ENCODE measurements at regions of chr2 and their contacts with region 1.

Region 1: GRCh38 chr2:230007931-230008707 is 60.6 kb downstream of the SLC16A14 start:
- DNase-seq: peak; percentile 44 to 92
- H3K4me3 ChIP-seq: no peak overlapping the region
- H3K27ac ChIP-seq: no peak overlapping the region
- H3K4me1 ChIP-seq: no peaks in the 10 kb centered on the region
- H3K27me3 ChIP-seq: no peaks in the 10 kb centered on the region
- CTCF ChIP-seq: peak; percentile 18 to 84 (median 78)
- EP300 ChIP-seq: no peak
- POLR2A ChIP-seq: no peak
- RAD21 ChIP-seq: peak; percentile 91 to 94

Region 2: DNA sequence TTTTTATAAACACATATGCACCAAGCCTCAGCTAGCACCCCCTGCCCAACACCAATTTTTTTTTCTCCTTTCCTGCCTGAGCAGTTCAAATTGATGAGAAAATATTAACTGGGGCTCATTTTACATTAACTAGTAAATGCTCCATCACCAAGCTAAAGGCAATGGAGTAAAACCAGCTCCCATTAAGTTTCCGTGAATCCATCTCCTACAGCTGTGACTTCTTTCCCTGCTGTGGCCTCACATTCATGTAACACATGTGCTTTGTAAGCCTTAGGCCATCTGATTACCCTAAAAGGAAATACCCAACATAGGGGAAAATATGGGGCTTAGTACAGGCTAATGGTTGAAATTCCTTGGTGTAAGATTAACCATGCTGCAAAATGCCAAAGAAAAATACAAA is 354.6 kb before region 1 on chr2:
- CTCF ChIA-PET with region 1: no interaction called
- POLR2A ChIA-PET with region 1: no interaction called
- DNase-seq: no peak
- H3K4me3 ChIP-seq: no peak overlapping the region
- H3K27ac ChIP-seq: no peak overlapping the region
- H3K4me1 ChIP-seq: peaks cover 0 to 16% (median under 1%) of the 10 kb centered on the region in 4 experiments; a peak in 3 of 7 replicates
- H3K27me3 ChIP-seq: no peaks in the 10 kb centered on the region
- CTCF ChIP-seq: no peak
- EP300 ChIP-seq: no peak
- POLR2A ChIP-seq: no peak
- RAD21 ChIP-seq: no peak

Region 3: DNA sequence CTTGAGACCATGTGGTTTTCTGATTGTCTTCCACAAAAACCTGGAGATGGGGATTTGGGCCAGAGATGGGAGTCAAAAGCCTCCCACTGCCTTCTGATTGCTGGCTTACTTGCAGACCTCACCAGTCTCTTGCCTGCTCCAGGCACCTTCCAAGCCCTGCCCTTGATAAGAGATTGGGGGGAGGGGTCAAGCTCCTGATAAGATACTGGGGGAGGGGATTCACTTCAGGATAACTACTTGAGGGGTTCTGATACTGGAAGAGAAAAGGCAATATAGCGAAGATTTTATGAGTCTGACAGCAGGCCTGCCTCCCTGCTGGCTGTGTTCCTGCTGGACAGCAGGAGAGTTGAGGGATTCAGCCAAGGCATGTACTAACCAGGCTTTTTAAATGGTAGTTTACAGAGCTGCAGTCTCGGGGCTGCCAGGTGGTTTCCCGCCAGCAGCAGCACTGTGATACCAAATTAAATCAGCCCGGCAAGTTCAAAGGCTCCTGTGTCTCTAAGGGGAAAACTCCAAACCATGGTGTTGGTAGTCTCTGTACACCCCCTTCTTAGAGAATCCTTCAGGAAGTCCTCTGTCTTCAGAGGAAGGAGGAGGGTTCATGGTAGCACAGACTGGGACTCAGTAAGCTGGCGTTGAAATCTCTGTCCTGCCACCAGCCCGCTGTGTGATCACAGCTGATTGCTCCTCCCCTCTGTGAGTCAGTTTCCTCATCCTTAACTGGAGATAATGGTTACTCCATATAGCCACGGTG is 27.5 kb before region 1 on chr2:
- CTCF ChIA-PET with region 1: interaction called, 12 read pairs
- POLR2A ChIA-PET with region 1: no interaction called
- DNase-seq: peak in 1 of 2 experiments; percentile 55
- H3K4me3 ChIP-seq: no peak overlapping the region
- H3K27ac ChIP-seq: no peak overlapping the region
- H3K4me1 ChIP-seq: peaks cover 2 to 9% (median 6%) of the 10 kb centered on the region in 4 experiments; a peak in 6 of 7 replicates
- H3K27me3 ChIP-seq: no peaks in the 10 kb centered on the region
- CTCF ChIP-seq: no peak
- EP300 ChIP-seq: no peak
- POLR2A ChIP-seq: no peak
- RAD21 ChIP-seq: no peak

Region 4: GRCh38 chr2:230018153-230018552 is 10.0 kb after region 1 on chr2:
- CTCF ChIA-PET with region 1: interaction called, 48 read pairs
- POLR2A ChIA-PET with region 1: interaction called, 3 read pairs
- DNase-seq: no peak
- H3K4me3 ChIP-seq: no peak overlapping the region
- H3K27ac ChIP-seq: no peak overlapping the region
- H3K4me1 ChIP-seq: no peaks in the 10 kb centered on the region
- H3K27me3 ChIP-seq: no peaks in the 10 kb centered on the region
- CTCF ChIP-seq: no peak
- EP300 ChIP-seq: no peak
- POLR2A ChIP-seq: no peak
- RAD21 ChIP-seq: no peak

Region 5: DNA sequence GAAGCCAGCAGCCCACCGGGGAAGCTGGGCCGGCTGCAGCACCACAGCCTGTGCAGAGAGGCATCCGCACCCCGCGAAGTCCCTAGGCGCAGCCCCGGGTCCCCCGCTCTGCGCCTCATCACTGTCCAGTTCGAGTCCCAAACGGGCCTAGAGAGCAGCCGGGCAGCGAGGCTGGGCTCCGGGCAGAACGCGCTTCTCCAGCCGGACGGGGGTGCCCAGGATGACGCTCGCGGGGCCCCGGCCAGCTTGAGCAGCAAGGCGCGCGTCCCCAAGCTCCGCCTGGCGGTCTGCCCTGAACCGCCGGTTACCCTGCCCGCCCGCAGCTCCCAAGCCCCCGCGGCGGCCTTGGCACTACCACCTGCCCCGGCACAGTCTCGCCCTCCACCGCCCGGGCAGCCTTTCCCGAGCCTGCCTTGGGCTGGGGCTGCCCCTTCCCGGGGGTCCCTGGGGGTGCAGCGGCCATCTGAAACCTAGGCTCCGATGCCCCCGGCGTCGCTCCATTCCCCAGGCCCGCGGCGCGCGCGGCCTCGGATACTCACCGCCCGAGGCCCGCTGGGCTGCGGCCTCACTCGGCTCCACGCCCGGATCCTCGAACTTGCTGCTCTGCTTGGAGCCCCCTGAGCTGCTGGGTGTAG is 60.0 kb after region 1 on chr2:
- CTCF ChIA-PET with region 1: interaction called, 36 read pairs
- POLR2A ChIA-PET with region 1: no interaction called
- DNase-seq: peak in 1 of 2 experiments; percentile 88
- H3K4me3 ChIP-seq: peak overlapping the region; percentile 62 to 71 (median 68)
- H3K27ac ChIP-seq: no peak overlapping the region
- H3K4me1 ChIP-seq: peaks cover 0 to 5% (median 3%) of the 10 kb centered on the region in 4 experiments; a peak in 3 of 7 replicates
- H3K27me3 ChIP-seq: peaks cover 10 to 27% (median 20%) of the 10 kb centered on the region in 4 experiments
- CTCF ChIP-seq: peak; percentile 20 to 32 (median 26)
- EP300 ChIP-seq: no peak
- POLR2A ChIP-seq: no peak; a peak in 1 of 3 replicates
- RAD21 ChIP-seq: peak in 1 of 2 experiments; percentile 6; a peak in 1 of 4 replicates

Region 6: GRCh38 chr2:230153390-230153976 is 145.4 kb after region 1 on chr2:
- CTCF ChIA-PET with region 1: interaction called, 64 read pairs
- POLR2A ChIA-PET with region 1: no interaction called
- DNase-seq: peak in 1 of 2 experiments; percentile 14
- H3K4me3 ChIP-seq: no peak overlapping the region
- H3K27ac ChIP-seq: no peak overlapping the region
- H3K4me1 ChIP-seq: no peaks in the 10 kb centered on the region; a peak in 1 of 7 replicates
- H3K27me3 ChIP-seq: no peaks in the 10 kb centered on the region
- CTCF ChIP-seq: no peak
- EP300 ChIP-seq: no peak
- POLR2A ChIP-seq: no peak
- RAD21 ChIP-seq: no peak

Region 7: GRCh38 chr2:230160112-230160660 is 152.1 kb after region 1 on chr2:
- CTCF ChIA-PET with region 1: interaction called, 64 read pairs
- POLR2A ChIA-PET with region 1: no interaction called
- DNase-seq: peak; percentile 31 to 71
- H3K4me3 ChIP-seq: no peak overlapping the region
- H3K27ac ChIP-seq: no peak overlapping the region
- H3K4me1 ChIP-seq: peaks cover 0 to 2% (median 0%) of the 10 kb centered on the region in 4 experiments; a peak in 1 of 7 replicates
- H3K27me3 ChIP-seq: no peaks in the 10 kb centered on the region
- CTCF ChIP-seq: peak; percentile 19 to 77 (median 72)
- EP300 ChIP-seq: no peak
- POLR2A ChIP-seq: no peak
- RAD21 ChIP-seq: peak; percentile 81 to 86